Esophagus muscularis mucosa (tissue), 4 donors: ENCODE measurements at regions of chr7 and their contacts with region 1.

Region 1: GRCh38 chr7:112449902-112450806 is at the start of gene IFRD1:
- DNase-seq: peak; percentile 100
- H3K4me3 ChIP-seq: peak within 1 kb of the TSS; percentile 84 to 100 (median 95)
- H3K27ac ChIP-seq: peak within 1 kb of the TSS; percentile 99 to 100 (median 100)
- H3K4me1 ChIP-seq: peaks cover 30 to 46% (median 43%) of the 10 kb centered on the region in 4 donors
- H3K27me3 ChIP-seq: no peaks in the 10 kb centered on the region
- CTCF ChIP-seq: peak in 1 of 3 experiments; percentile 3
- EP300 ChIP-seq: no peak
- POLR2A ChIP-seq: peak; percentile 99
- total RNA-seq, gene IFRD1: 36.9 to 51.5 (median 48.0) TPM

Region 2: GRCh38 chr7:112390167-112390566 is 60.0 kb before region 1 on chr7:
- intact Hi-C with region 1: loop called (anchors 5 kb)
- DNase-seq: peak; percentile 68
- H3K4me3 ChIP-seq: no peak overlapping the region
- H3K27ac ChIP-seq: no peak overlapping the region
- H3K4me1 ChIP-seq: peaks cover 6 to 8% (median 7%) of the 10 kb centered on the region in 4 donors
- H3K27me3 ChIP-seq: no peaks in the 10 kb centered on the region
- CTCF ChIP-seq: no peak
- EP300 ChIP-seq: no peak
- POLR2A ChIP-seq: no peak